T-cell (primary cell): ENCODE measurements at regions of chr6 and their contacts with region 1.

Region 1: GRCh38 chr6:70171236-70171635 is 131.6 kb downstream of the COL9A1 start:
- DNase-seq: no peak
- ATAC-seq: no peak
- H3K4me3 ChIP-seq: no peak overlapping the region
- H3K4me3 Mint-ChIP-seq: no peak overlapping the region
- H3K27ac ChIP-seq: no peak overlapping the region
- H3K27ac Mint-ChIP-seq: no peak overlapping the region
- H3K4me1 ChIP-seq: no peaks in the 10 kb centered on the region
- H3K4me1 Mint-ChIP-seq: peaks cover 3 to 8% (median 4%) of the 10 kb centered on the region in 3 donors
- H3K27me3 ChIP-seq: peaks cover 0 to 2% of the 10 kb centered on the region in 2 experiments
- H3K27me3 Mint-ChIP-seq: peaks cover 10 to 20% of the 10 kb centered on the region in 2 donors

Region 2: DNA sequence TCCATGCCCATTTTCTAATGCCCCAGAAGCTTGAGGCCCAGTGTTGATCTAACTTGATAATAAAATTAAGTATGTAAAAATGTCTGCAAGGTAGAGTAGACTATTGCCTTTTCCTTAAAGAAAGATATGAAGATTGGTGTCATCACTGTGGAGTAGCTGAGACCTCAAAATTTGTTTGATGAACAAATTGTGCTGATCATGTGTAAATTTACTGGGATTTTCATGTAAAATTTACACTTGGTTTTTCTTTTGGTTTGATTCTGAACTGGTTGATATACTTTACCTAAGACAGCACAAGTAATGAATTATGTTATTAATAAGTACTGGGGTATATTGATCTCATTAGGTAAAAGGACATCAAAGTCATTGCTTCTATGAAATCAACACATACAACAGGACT is 97.6 kb before region 1 on chr6:
- CTCF ChIA-PET with region 1: no interaction called
- POLR2A ChIA-PET with region 1: interaction called in 1 of 2 experiments, 15 read pairs
- DNase-seq: no peak
- ATAC-seq: no peak
- H3K4me3 ChIP-seq: no peak overlapping the region
- H3K4me3 Mint-ChIP-seq: no peak overlapping the region
- H3K27ac ChIP-seq: no peak overlapping the region
- H3K27ac Mint-ChIP-seq: no peak overlapping the region
- H3K4me1 ChIP-seq: no peaks in the 10 kb centered on the region
- H3K4me1 Mint-ChIP-seq: no peaks in the 10 kb centered on the region
- H3K27me3 ChIP-seq: no peaks in the 10 kb centered on the region
- H3K27me3 Mint-ChIP-seq: no peaks in the 10 kb centered on the region